ENCODE measurements at regions of chr6 and their contacts with region 1.

Region 1: GRCh38 chr6:114108119-114109002 is 137.4 kb upstream of the HDAC2 start:
- DNase-seq: peak; percentile 39
- H3K4me3 ChIP-seq: no peak overlapping the region
- H3K27ac ChIP-seq: no peak overlapping the region
- H3K4me1 ChIP-seq: no peaks in the 10 kb centered on the region
- H3K27me3 ChIP-seq: peaks cover 3% of the 10 kb centered on the region
- CTCF ChIP-seq: peak; percentile 63

Region 2: GRCh38 chr6:113980937-113981554 is 127.3 kb before region 1 on chr6:
- intact Hi-C with region 1: loop called (anchors 10 kb)
- DNase-seq: no peak
- H3K4me3 ChIP-seq: no peak overlapping the region
- H3K27ac ChIP-seq: no peak overlapping the region
- H3K4me1 ChIP-seq: no peaks in the 10 kb centered on the region
- H3K27me3 ChIP-seq: no peaks in the 10 kb centered on the region
- CTCF ChIP-seq: peak; percentile 51